Activated CD8-positive, alpha-beta T cell treated with anti-CD3 and anti-CD28 coated beads for 36 hours (primary cell): ENCODE measurements at regions of chr6 and their contacts with region 1.

Region 1: DNA sequence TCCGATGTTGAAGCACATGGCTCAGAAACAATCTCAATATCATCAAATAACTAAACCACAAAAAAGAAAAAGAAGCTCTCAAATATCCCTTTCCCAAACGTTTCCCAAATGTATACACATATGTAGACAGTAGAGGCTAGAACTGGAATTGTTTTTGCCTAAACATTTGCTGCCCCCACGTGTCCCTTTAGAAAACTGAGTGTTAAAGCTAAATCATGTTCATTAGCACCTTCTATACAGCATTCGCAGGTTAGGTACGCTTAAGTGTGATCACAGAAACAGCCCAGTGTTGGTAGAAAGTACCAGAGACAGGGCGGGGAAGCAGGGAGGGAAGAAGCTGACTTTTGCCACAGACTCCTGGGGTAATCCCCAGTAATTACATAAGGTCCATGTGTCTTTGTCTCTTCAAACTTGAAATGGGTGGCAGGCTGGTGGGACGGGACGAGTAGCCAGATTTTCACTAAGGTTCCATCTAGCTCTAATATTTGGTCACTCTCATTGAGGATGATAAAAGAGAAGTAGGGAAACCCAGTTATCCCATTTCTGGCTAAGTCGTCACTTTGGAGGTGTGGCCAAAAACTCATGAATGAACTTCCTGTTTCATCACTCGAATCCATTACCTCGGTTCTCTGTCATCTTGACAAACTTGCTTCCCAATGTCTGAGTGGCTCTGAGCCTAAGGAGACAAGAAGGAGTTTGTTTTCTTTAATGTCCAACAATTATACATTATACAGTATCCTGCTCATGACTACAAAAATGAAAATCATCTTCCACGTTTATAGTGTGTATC is 15.0 kb upstream of the TFAP2A start:
- DNase-seq: no peak
- ATAC-seq: peak; percentile 65
- H3K4me3 Mint-ChIP-seq: peak overlapping the region; percentile 30
- H3K27ac Mint-ChIP-seq: no peak overlapping the region
- H3K4me1 Mint-ChIP-seq: peaks cover 10% of the 10 kb centered on the region
- H3K27me3 Mint-ChIP-seq: peaks cover 47% of the 10 kb centered on the region
- CTCF ChIP-seq: peak; percentile 49

Region 2: DNA sequence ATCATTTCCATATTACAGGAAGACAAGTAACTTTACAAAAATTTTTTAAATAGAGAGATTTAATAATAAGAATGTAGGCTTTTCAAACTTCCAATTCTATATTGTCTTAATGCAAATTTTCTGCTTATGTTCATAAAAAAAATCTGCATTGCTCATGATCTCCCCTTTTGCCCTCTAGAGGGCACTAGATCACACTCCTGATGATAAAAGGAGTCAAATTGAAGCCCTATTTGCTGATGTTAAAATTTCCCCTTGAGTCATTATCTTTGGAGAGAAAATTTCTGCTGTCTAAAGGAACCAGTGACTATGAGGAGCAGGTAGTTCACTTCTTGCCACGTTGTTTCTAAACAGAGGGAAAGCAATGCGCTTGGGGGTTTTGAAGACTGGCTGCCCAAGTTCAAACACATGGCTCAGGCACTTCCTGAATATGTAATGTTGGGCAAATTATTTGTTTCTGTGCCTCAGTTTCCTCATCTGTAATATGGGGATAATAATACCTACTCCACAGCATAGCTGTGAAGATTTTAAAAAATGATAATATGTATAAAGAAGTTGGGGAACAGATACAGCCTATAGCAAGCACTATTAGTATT is 889.2 kb before region 1 on chr6:
- CTCF ChIA-PET with region 1: interaction called, 4 read pairs
- POLR2A ChIA-PET with region 1: no interaction called
- intact Hi-C with region 1: loop called (anchors 10 kb)
- DNase-seq: peak; percentile 12
- ATAC-seq: peak; percentile 51
- H3K4me3 Mint-ChIP-seq: no peak overlapping the region
- H3K27ac Mint-ChIP-seq: no peak overlapping the region
- H3K4me1 Mint-ChIP-seq: no peaks in the 10 kb centered on the region
- H3K27me3 Mint-ChIP-seq: no peaks in the 10 kb centered on the region
- CTCF ChIP-seq: peak; percentile 36

Region 3: DNA sequence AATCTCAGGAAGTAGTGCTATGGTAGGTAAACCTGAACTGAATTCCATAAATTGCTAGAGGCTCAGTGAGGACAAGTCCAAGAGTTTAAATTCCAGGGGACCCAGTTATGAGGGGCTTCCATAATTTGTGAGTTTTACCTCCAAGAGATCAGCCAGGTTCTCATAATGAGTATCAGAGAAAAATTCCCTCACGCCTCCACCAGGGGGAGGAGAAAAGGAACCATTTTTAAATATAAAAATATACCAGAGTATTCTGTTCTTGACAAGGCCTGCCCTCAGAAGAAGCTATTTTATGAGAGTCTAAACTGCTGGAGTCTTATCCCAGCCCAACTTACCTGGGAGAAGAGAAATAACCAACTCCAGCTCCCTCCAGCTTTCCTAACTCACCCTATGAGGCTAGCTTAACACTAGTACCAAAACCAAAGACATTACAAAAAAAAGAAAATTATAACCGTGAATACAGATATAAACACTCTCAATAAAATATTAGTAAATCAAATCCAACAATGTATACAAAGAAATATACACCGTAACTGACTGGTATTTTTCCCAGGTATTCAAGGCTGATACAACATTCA is 173.6 kb before region 1 on chr6:
- CTCF ChIA-PET with region 1: interaction called, 9 read pairs
- POLR2A ChIA-PET with region 1: no interaction called
- intact Hi-C with region 1: loop called (anchors 10 kb)
- DNase-seq: peak; percentile 9
- ATAC-seq: no peak
- H3K4me3 Mint-ChIP-seq: no peak overlapping the region
- H3K27ac Mint-ChIP-seq: no peak overlapping the region
- H3K4me1 Mint-ChIP-seq: no peaks in the 10 kb centered on the region
- H3K27me3 Mint-ChIP-seq: peaks cover 2% of the 10 kb centered on the region
- CTCF ChIP-seq: peak; percentile 63

Region 4: GRCh38 chr6:10411971-10412745 is 17.7 kb before region 1 on chr6:
- CTCF ChIA-PET with region 1: interaction called, 23 read pairs
- POLR2A ChIA-PET with region 1: interaction called, 5 read pairs
- intact Hi-C with region 1: no loop called
- DNase-seq: peak; percentile 57
- ATAC-seq: peak; percentile 69
- H3K4me3 Mint-ChIP-seq: peak overlapping the region; percentile 81
- H3K27ac Mint-ChIP-seq: peak overlapping the region; percentile 52
- H3K4me1 Mint-ChIP-seq: peaks cover 37% of the 10 kb centered on the region
- H3K27me3 Mint-ChIP-seq: peaks cover 86% of the 10 kb centered on the region
- CTCF ChIP-seq: no peak